Activated CD4-positive, alpha-beta memory T cell treated with anti-CD3 and anti-CD28 coated beads for 36 hours (primary cell): ENCODE measurements at regions of chr1 and their contacts with region 1.

Region 1: DNA sequence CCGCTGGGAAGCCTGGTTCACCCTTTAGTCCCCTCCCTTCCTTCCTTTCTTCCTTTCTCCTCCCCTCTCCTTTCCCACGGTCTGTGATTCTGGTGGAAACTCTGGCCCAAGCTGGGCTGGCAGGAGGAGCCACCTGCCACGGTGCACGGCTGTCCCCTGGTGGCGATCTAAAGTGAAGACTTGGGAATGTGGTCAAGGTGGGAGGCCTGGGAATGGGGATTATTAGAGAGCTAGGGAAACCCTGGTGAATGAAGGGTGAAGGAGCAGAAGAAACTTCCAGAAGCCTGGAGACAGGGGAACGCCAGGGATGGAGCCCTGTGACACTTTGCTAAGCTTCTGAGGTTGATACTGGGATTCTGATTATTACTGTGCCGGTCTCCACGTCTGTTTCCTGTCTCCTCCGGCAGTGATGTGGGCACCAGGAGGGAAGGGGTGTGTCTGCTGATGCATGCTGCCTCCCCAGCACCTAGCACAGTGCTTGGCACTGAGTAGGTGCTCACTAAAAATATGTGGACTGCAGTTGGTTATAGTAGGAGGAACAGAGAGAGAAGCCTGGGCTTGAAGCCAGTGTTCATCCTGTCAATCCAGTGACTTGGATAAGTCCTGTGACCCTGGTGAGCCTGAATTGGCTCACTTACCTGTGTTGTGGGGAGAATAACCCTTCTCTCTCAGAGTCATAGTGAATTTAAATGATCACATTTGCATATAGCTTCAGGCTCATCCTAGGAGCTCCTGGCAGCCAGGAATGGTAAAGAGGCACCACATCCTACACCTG is 71.2 kb upstream of the NBPF3 start:
- DNase-seq: peak; percentile 69
- H3K4me3 Mint-ChIP-seq: peak overlapping the region; percentile 2
- H3K27ac Mint-ChIP-seq: peak overlapping the region; percentile 10
- H3K4me1 Mint-ChIP-seq: peaks cover 10% of the 10 kb centered on the region
- H3K27me3 Mint-ChIP-seq: no peaks in the 10 kb centered on the region

Region 2: GRCh38 chr1:21129407-21129806 is 239.3 kb before region 1 on chr1:
- CTCF ChIA-PET with region 1: no interaction called
- POLR2A ChIA-PET with region 1: no interaction called
- intact Hi-C with region 1: no loop called
- DNase-seq: no peak
- H3K4me3 Mint-ChIP-seq: no peak overlapping the region
- H3K27ac Mint-ChIP-seq: no peak overlapping the region
- H3K4me1 Mint-ChIP-seq: no peaks in the 10 kb centered on the region
- H3K27me3 Mint-ChIP-seq: no peaks in the 10 kb centered on the region

Region 3: DNA sequence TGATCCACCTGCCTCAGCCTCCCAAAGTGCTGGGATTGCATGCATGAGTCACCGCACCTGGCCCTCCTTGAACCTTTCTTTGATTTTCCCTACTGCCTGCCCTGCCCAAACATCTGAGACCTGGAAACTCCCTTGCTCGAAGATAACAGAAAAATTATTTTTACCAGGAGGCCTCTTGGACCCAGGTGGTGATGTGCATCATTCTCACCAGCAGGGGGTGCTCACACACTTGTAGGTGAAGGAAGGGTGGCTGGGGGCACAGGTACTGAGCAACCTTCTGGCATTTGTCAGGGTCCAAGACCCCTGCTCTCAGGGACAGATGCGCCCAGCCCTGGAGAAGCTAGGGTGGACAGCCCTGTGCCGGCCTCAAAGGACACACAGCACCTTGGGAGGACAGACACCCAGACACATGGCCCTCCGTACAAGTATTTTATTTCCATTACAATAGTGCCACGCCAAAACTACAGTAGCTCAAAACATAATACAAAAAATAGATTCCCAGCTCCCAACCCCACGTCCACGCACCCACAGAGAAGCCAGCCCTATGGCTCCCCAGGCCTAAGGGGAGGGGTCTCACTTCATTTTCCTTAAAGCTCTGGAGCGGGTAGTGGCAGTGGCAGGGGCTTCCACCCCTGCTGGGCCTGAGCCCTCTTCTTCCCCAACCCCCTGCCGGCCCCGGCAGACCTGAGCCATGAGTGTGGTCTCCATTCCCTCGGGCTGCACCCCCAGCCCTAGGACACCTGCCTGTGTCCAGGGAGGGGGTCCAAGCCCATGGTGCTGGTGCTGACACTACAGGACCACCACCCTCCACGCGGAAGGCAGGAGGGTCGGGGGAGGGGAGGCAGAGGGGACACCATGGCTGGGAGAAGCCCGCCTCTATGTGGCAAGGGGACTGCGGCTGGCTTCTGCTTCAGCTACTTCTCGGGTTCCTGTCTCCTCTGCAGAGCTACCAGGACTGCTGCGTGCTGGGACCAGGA is 151.6 kb before region 1 on chr1:
- CTCF ChIA-PET with region 1: interaction called, 46 read pairs
- POLR2A ChIA-PET with region 1: no interaction called
- intact Hi-C with region 1: loop called (anchors 2 kb)
- DNase-seq: peak; percentile 81
- H3K4me3 Mint-ChIP-seq: no peak overlapping the region
- H3K27ac Mint-ChIP-seq: peak overlapping the region; percentile 46
- H3K4me1 Mint-ChIP-seq: peaks cover 3% of the 10 kb centered on the region
- H3K27me3 Mint-ChIP-seq: no peaks in the 10 kb centered on the region

Region 4: GRCh38 chr1:21244986-21245687 is 123.6 kb before region 1 on chr1:
- CTCF ChIA-PET with region 1: interaction called, 28 read pairs
- POLR2A ChIA-PET with region 1: no interaction called
- intact Hi-C with region 1: no loop called
- DNase-seq: peak; percentile 27
- H3K4me3 Mint-ChIP-seq: no peak overlapping the region
- H3K27ac Mint-ChIP-seq: no peak overlapping the region
- H3K4me1 Mint-ChIP-seq: no peaks in the 10 kb centered on the region
- H3K27me3 Mint-ChIP-seq: no peaks in the 10 kb centered on the region

Region 5: DNA sequence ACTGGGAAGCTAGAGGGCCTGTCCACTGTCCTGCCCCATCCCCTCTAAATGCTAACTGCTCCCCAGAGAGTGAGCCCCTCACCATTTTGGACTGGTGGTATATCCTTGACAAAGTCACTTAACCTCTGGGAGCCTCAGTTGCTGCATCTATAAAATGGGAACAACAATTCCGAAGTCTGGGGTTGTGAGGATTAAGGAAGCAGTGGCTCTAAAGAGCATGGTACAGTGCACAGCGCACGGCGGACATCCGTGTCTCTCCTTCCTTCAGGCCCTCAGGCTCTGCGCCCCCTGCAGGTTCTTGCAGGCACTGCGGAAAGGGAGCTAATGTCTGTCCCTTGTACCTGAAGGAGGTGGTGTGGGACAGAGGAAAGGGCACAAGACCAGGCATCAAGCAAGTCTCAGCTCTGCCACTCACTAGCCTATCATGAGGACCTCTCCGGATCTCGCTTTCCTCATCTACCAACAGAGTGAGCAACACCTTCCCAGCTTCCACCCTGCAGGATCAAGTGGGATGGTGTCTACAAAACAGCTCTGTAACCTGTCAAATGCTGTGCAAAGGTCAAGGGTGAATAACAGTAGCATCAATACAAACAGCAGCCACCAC is 98.5 kb before region 1 on chr1:
- CTCF ChIA-PET with region 1: interaction called, 50 read pairs
- POLR2A ChIA-PET with region 1: no interaction called
- intact Hi-C with region 1: no loop called
- DNase-seq: peak; percentile 90
- H3K4me3 Mint-ChIP-seq: no peak overlapping the region
- H3K27ac Mint-ChIP-seq: no peak overlapping the region
- H3K4me1 Mint-ChIP-seq: peaks cover 23% of the 10 kb centered on the region
- H3K27me3 Mint-ChIP-seq: no peaks in the 10 kb centered on the region

Region 6: DNA sequence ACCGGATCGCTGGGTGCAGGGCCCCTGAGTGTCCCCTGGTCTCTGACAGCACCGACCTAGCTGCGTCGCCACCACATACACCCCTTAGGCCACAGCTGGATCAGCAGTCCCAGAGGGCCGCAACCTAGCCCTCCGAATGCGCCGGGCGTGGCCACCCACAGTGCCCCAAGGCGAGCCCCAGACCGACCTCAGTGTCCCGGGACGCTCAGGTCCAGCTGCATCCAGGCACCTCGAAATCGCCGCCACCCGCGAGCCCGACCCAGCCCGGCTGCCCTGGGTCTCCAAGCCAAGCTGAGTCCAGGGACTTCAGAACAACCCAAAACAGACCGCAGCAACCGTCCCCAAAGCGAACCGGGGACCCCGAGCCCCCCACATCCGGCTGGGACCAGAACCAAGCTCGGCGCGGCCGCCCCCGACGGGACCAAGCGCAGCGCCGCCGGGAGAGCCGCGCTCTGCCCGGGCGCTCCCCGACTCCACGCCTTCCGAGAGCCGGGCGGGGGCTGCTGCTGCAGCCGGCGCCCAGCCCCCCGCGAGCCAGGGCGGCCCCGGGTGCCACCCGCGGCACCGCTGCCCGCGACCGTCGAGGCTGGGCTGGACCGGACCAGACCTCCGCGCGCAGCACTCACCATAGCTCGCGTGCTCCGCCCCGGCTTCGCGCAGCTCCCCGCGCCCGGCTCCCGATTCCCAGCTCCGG is 23.8 kb before region 1 on chr1:
- CTCF ChIA-PET with region 1: interaction called, 14 read pairs
- POLR2A ChIA-PET with region 1: interaction called, 3 read pairs
- intact Hi-C with region 1: no loop called
- DNase-seq: peak; percentile 45
- H3K4me3 Mint-ChIP-seq: peak overlapping the region; percentile 91
- H3K27ac Mint-ChIP-seq: peak overlapping the region; percentile 94
- H3K4me1 Mint-ChIP-seq: peaks cover 40% of the 10 kb centered on the region
- H3K27me3 Mint-ChIP-seq: no peaks in the 10 kb centered on the region

Region 7: GRCh38 chr1:21490774-21491553 is 122.3 kb after region 1 on chr1:
- CTCF ChIA-PET with region 1: interaction called, 16 read pairs
- POLR2A ChIA-PET with region 1: no interaction called
- intact Hi-C with region 1: no loop called
- DNase-seq: peak; percentile 59
- H3K4me3 Mint-ChIP-seq: no peak overlapping the region
- H3K27ac Mint-ChIP-seq: no peak overlapping the region
- H3K4me1 Mint-ChIP-seq: peaks cover 8% of the 10 kb centered on the region
- H3K27me3 Mint-ChIP-seq: peaks cover 8% of the 10 kb centered on the region